Mammary epithelial cell (primary cell): ENCODE measurements at regions of chr20 and their contacts with region 1.

Region 1: DNA sequence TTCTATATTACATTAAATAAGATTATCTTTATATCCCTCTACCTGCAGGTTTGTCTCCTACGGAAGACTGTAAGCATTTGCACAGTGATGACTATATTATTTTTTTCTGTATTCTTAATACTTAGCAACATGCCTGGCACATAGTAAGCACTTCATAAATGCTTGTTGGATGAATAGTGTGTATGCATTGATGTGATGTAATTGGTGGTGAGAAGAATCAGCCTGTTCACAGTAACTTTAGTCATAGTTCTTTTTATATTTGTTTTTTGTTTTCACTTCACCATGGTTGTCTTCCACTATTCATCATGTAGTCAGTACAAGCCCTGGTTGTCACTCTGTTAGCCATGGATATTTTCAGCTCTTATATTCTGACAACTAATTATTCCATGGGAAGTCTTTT is 184.0 kb upstream of the FLRT3 start:
- DNase-seq: peak; percentile 93
- H3K4me3 ChIP-seq: no peak overlapping the region
- H3K27ac ChIP-seq: peak overlapping the region; percentile 99
- H3K4me1 ChIP-seq: peaks cover 36% of the 10 kb centered on the region
- H3K27me3 ChIP-seq: no peaks in the 10 kb centered on the region
- CTCF ChIP-seq: no peak

Region 2: DNA sequence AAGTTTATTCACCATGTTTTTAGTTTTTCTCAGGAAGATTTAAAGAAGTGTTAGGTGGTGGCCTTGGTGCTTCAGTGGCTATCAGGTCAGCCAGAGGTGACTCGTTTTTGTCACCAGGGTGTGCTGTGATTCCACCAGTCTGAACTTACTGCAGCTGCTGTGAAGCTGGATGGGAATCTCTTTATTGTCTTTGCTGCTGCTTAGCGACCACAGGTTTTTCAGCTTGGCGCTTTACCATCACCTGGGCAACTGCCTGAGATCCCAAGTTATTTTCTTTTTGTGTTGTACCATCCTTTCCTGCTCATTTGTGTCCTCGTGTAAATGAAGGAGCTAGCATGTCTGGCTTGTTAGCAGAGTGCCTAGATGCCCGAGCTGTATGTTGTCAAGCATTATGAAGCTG is 379.3 kb before region 1 on chr20:
- CTCF ChIA-PET with region 1: no interaction called
- dilution Hi-C with region 1: no loop called
- in situ Hi-C with region 1: no loop called
- intact Hi-C with region 1: loop called (anchors 5 kb)
- DNase-seq: peak; percentile 66
- H3K4me3 ChIP-seq: no peak overlapping the region
- H3K27ac ChIP-seq: no peak overlapping the region
- H3K4me1 ChIP-seq: peaks cover 6% of the 10 kb centered on the region
- H3K27me3 ChIP-seq: no peaks in the 10 kb centered on the region
- CTCF ChIP-seq: peak; percentile 70 to 78

Region 3: DNA sequence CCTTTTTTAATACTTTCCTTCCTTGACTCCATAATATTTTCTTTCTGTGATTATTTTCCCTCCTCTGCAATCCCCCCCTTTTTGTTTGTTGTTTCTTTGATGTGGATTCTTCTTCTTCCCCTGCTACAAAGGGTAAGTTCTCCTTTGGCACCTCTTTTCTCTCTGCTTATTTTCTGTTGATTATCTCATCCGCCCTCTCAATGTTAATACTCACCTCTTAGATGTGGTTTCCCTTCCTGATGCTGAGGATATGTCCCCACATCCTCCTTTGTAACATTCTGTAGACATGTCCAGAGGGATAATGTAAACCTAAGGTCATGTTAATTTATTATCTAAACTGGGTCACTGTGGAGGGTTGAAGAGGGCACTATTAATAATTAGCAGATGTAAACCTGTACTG is 201.7 kb before region 1 on chr20:
- CTCF ChIA-PET with region 1: no interaction called
- dilution Hi-C with region 1: no loop called
- in situ Hi-C with region 1: no loop called
- intact Hi-C with region 1: no loop called
- DNase-seq: no peak
- H3K4me3 ChIP-seq: no peak overlapping the region
- H3K27ac ChIP-seq: no peak overlapping the region
- H3K4me1 ChIP-seq: peaks cover 11% of the 10 kb centered on the region
- H3K27me3 ChIP-seq: no peaks in the 10 kb centered on the region
- CTCF ChIP-seq: no peak

Region 4: GRCh38 chr20:14434379-14435136 is 86.9 kb before region 1 on chr20:
- CTCF ChIA-PET with region 1: no interaction called
- dilution Hi-C with region 1: no loop called
- in situ Hi-C with region 1: no loop called
- intact Hi-C with region 1: loop called (anchors 5 kb)
- DNase-seq: peak; percentile 96
- H3K4me3 ChIP-seq: no peak overlapping the region
- H3K27ac ChIP-seq: peak overlapping the region; percentile 67
- H3K4me1 ChIP-seq: peaks cover 17% of the 10 kb centered on the region
- H3K27me3 ChIP-seq: no peaks in the 10 kb centered on the region
- CTCF ChIP-seq: no peak

Region 5: GRCh38 chr20:14570811-14571210 is 49.4 kb after region 1 on chr20:
- CTCF ChIA-PET with region 1: no interaction called
- dilution Hi-C with region 1: no loop called
- in situ Hi-C with region 1: no loop called
- intact Hi-C with region 1: no loop called
- DNase-seq: no peak
- H3K4me3 ChIP-seq: no peak overlapping the region
- H3K27ac ChIP-seq: no peak overlapping the region
- H3K4me1 ChIP-seq: peaks cover 13% of the 10 kb centered on the region
- H3K27me3 ChIP-seq: no peaks in the 10 kb centered on the region
- CTCF ChIP-seq: no peak

Region 6: GRCh38 chr20:14622796-14623195 is 101.4 kb after region 1 on chr20:
- CTCF ChIA-PET with region 1: no interaction called
- dilution Hi-C with region 1: no loop called
- in situ Hi-C with region 1: no loop called
- intact Hi-C with region 1: loop called (anchors 2 kb)
- DNase-seq: peak; percentile 85
- H3K4me3 ChIP-seq: no peak overlapping the region
- H3K27ac ChIP-seq: no peak overlapping the region
- H3K4me1 ChIP-seq: peaks cover 12% of the 10 kb centered on the region
- H3K27me3 ChIP-seq: no peaks in the 10 kb centered on the region
- CTCF ChIP-seq: peak; percentile 59

Region 7: DNA sequence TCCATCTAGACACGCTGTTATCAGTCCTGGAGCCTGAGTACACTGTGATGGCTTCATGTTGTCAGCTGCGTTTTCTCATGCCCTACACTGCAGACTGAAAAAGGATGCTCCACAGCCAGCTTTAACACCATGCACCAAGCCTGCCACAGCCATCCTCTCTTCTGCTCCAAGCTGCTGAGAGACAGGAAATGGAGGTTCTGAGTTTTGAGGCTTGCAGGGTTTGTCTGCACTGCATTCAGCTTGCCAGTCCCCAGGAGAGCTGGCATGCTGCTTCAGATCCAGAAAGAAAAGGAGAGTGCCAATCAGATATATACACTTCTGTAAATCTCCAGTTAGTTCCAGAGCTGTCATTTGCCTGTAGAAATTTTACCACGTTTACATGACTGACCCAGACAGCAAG is 366.7 kb after region 1 on chr20:
- CTCF ChIA-PET with region 1: no interaction called
- dilution Hi-C with region 1: no loop called
- in situ Hi-C with region 1: no loop called
- intact Hi-C with region 1: loop called (anchors 10 kb)
- DNase-seq: no peak
- H3K4me3 ChIP-seq: no peak overlapping the region
- H3K27ac ChIP-seq: no peak overlapping the region
- H3K4me1 ChIP-seq: peaks cover 12% of the 10 kb centered on the region
- H3K27me3 ChIP-seq: no peaks in the 10 kb centered on the region
- CTCF ChIP-seq: no peak

Region 8: DNA sequence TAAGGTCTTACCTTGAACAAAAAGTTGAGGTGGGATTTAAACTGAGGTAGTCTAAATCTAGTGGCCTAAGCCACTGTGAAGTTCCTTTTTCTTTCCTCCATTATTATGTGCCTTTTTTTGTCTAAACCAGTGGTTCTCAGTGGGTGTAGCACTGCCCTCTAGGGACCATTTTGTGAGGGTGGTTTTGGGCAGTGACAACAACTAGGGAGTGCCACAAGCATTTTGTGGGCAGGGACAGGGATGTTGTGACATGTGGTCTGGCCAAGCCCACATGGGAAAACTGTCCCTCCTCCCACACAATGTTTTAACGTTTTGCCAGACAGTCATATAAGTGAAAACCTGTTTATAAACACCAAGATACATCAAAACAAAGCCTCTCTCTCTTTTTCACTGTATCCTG is 715.4 kb after region 1 on chr20:
- CTCF ChIA-PET with region 1: no interaction called
- dilution Hi-C with region 1: no loop called
- in situ Hi-C with region 1: no loop called
- intact Hi-C with region 1: loop called (anchors 5 kb)
- DNase-seq: peak; percentile 67
- H3K4me3 ChIP-seq: no peak overlapping the region
- H3K27ac ChIP-seq: no peak overlapping the region
- H3K4me1 ChIP-seq: peaks cover 12% of the 10 kb centered on the region
- H3K27me3 ChIP-seq: no peaks in the 10 kb centered on the region
- CTCF ChIP-seq: peak; percentile 76 to 78